K562 (cell line): ENCODE measurements at regions of chr6 and their contacts with region 1.

Region 1: GRCh38 chr6:42572523-42572922 is 8.7 kb downstream of the UBR2 start:
- DNase-seq: no peak
- ATAC-seq: peak; percentile 20
- H3K4me3 ChIP-seq: no peak overlapping the region
- H3K27ac ChIP-seq: peak overlapping the region; percentile 19; the same call in 1 of the 3 replicates
- H3K4me1 ChIP-seq: peaks cover 3 to 5% of the 10 kb centered on the region in 2 experiments; a peak in 3 of 5 replicates
- H3K27me3 ChIP-seq: no peaks in the 10 kb centered on the region
- CTCF ChIP-seq: no peak
- EP300 ChIP-seq: no peak
- POLR2A ChIP-seq: no peak
- RAD21 ChIP-seq: no peak

Region 2: GRCh38 chr6:42610416-42610815 is 37.9 kb after region 1 on chr6:
- CTCF ChIA-PET with region 1: no interaction called
- POLR2A ChIA-PET with region 1: no interaction called
- in situ Hi-C with region 1: no loop called
- intact Hi-C with region 1: no loop called
- DNase-seq: no peak
- ATAC-seq: no peak
- H3K4me3 ChIP-seq: no peak overlapping the region
- H3K27ac ChIP-seq: no peak overlapping the region
- H3K4me1 ChIP-seq: no peaks in the 10 kb centered on the region
- H3K27me3 ChIP-seq: no peaks in the 10 kb centered on the region
- CTCF ChIP-seq: no peak
- EP300 ChIP-seq: no peak
- POLR2A ChIP-seq: no peak
- RAD21 ChIP-seq: no peak

Region 3: DNA sequence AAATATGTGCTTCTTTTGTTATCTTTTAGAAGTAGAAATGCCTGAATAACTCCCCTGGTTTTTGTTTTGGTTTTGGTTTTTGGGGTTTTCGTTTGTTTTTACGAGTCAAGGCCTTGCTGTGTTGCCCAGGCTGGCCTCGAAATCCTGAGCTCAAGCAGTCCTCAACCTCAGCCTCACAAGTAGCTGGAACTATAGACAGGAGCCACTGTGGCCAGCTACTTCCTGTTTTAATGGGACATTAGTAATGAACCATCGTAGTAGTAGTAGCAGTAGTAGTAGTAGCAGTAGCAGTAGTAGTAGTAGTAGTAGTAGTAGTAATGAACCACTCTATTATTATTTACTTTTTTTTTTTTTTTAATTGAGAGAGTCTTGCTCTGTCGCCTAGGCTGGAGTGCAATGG is 57.3 kb after region 1 on chr6:
- CTCF ChIA-PET with region 1: no interaction called
- POLR2A ChIA-PET with region 1: interaction called, 3 read pairs
- in situ Hi-C with region 1: no loop called
- intact Hi-C with region 1: loop called (anchors 2 kb)
- DNase-seq: no peak
- ATAC-seq: no peak
- H3K4me3 ChIP-seq: no peak overlapping the region
- H3K27ac ChIP-seq: no peak overlapping the region
- H3K4me1 ChIP-seq: peaks cover 13 to 18% of the 10 kb centered on the region in 2 experiments
- H3K27me3 ChIP-seq: no peaks in the 10 kb centered on the region
- CTCF ChIP-seq: no peak
- EP300 ChIP-seq: no peak
- POLR2A ChIP-seq: no peak
- RAD21 ChIP-seq: no peak

Region 4: DNA sequence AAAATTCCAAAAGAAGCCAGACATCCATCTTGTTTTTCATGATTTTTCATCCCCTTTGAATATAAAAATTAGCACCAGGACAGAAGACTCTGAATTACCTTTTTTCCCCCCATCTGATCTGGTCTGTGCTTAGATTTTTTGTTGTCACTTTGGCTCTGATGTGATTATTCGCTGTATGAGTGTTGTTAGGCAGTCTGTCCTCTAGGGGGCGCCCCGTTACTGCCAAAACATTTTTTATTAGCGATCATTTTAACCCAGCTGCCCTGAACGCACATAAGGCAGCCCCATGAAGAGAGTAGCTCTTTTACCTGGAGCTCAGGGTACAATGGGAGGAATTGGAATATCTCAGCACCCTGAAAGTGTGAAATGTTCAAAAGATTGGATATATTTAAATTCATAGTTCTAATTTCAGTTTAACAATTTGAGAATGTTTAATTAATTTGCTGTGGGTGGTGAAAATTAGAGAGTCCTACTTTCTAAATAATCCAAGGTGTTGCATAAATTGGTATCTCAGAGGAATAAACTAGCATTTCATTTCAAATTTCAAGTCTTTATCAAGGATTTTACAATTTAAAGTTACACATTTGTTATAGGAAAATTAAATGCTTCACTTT is 89.1 kb after region 1 on chr6:
- CTCF ChIA-PET with region 1: no interaction called
- POLR2A ChIA-PET with region 1: no interaction called
- in situ Hi-C with region 1: no loop called
- intact Hi-C with region 1: loop called (anchors 5 kb)
- DNase-seq: peak; percentile 68 to 84 (median 70)
- ATAC-seq: peak; percentile 97
- H3K4me3 ChIP-seq: no peak overlapping the region
- H3K27ac ChIP-seq: no peak overlapping the region
- H3K4me1 ChIP-seq: no peaks in the 10 kb centered on the region
- H3K27me3 ChIP-seq: no peaks in the 10 kb centered on the region
- CTCF ChIP-seq: peak; percentile 80 to 94 (median 89)
- EP300 ChIP-seq: 0 out of 2 replicates have a peak, but pooled peaks have one; percentile 7
- POLR2A ChIP-seq: no peak
- RAD21 ChIP-seq: peak; percentile 87 to 88